Activated naive CD4-positive, alpha-beta T cell treated with anti-CD3 and anti-CD28 coated beads, Interleukin-2, amount 10 ng/mL, durations not matched to agents 7 days and 5 days (primary cell): ENCODE measurements at regions of chr5 and their contacts with region 1.

Region 1: GRCh38 chr5:54229041-54229780 is 81.2 kb downstream of the ARL15 start:
- DNase-seq: peak; percentile 82
- H3K4me3 Mint-ChIP-seq: no peak overlapping the region
- H3K27ac Mint-ChIP-seq: no peak overlapping the region
- H3K4me1 Mint-ChIP-seq: no peaks in the 10 kb centered on the region
- H3K27me3 Mint-ChIP-seq: peaks cover 7% of the 10 kb centered on the region

Region 2: GRCh38 chr5:53170748-53171349 is 1058.4 kb before region 1 on chr5:
- CTCF ChIA-PET with region 1: interaction called, 15 read pairs
- DNase-seq: peak; percentile 22
- H3K4me3 Mint-ChIP-seq: no peak overlapping the region
- H3K27ac Mint-ChIP-seq: no peak overlapping the region
- H3K4me1 Mint-ChIP-seq: no peaks in the 10 kb centered on the region
- H3K27me3 Mint-ChIP-seq: peaks cover 12% of the 10 kb centered on the region

Region 3: GRCh38 chr5:53478411-53479044 is 750.7 kb before region 1 on chr5:
- CTCF ChIA-PET with region 1: interaction called, 17 read pairs
- DNase-seq: peak; percentile 23
- H3K4me3 Mint-ChIP-seq: peak overlapping the region; percentile 57
- H3K27ac Mint-ChIP-seq: no peak overlapping the region
- H3K4me1 Mint-ChIP-seq: peaks cover 40% of the 10 kb centered on the region
- H3K27me3 Mint-ChIP-seq: peaks cover 67% of the 10 kb centered on the region

Region 4: GRCh38 chr5:54263447-54263846 is 34.2 kb after region 1 on chr5:
- CTCF ChIA-PET with region 1: no interaction called
- DNase-seq: no peak
- H3K4me3 Mint-ChIP-seq: no peak overlapping the region
- H3K27ac Mint-ChIP-seq: no peak overlapping the region
- H3K4me1 Mint-ChIP-seq: no peaks in the 10 kb centered on the region
- H3K27me3 Mint-ChIP-seq: no peaks in the 10 kb centered on the region